WTC11 (cell line): ENCODE measurements at regions of chr11 and their contacts with region 1.

Region 1: DNA sequence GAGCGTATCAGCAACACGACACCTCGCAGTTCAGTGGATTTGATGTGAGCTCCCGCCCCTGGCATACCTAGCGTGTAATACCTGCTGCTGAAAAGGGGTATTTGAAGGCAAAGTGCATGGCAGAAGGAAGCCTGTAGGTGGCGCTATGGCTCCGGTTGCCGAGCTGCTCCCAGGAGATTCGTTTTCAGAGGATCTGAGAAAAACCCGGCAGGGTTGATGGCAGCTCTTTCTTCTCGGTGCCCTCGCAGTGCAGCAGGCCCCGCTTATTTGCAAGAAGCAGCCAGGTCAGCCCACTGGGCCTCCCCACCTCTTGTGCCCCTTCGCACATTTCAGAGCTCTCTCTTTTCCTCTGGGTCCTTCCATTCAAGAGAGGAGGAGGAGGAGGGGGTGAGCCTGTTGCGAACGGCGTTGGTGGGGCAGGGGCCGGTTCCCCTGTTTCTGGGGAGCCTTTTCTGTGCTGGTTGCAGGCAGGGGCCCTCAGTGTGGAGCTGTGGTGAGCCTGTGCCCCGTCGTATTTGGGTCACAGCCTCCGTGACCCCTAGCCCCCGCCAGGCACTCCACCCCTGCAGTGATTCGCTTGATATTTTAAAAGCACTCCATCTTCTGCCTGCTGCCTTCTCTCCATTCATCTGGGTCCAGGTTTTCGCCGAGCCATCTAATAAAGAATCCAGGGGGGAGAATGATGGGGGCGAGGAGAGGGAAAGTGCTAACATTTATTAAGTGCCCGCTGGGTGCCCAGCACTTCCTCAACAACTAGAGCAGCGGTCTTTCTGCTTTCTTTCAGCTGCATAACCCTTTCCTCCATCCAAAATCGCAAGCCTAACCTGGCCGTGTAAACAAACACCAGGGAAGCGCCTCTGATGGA is 85.3 kb upstream of the SYT13 start:
- DNase-seq: peak; percentile 93
- ATAC-seq: peak; percentile 91
- H3K4me3 Mint-ChIP-seq: peak overlapping the region; percentile 65
- H3K27ac Mint-ChIP-seq: no peak overlapping the region
- H3K4me1 Mint-ChIP-seq: peaks cover 16% of the 10 kb centered on the region
- H3K27me3 Mint-ChIP-seq: peaks cover 13% of the 10 kb centered on the region
- CTCF ChIP-seq: peak; percentile 93

Region 2: GRCh38 chr11:45007011-45007410 is 364.5 kb before region 1 on chr11:
- CTCF ChIA-PET with region 1: no interaction called
- POLR2A ChIA-PET with region 1: no interaction called
- DNase-seq: no peak
- ATAC-seq: no peak
- H3K4me3 Mint-ChIP-seq: no peak overlapping the region
- H3K27ac Mint-ChIP-seq: no peak overlapping the region
- H3K4me1 Mint-ChIP-seq: no peaks in the 10 kb centered on the region
- H3K27me3 Mint-ChIP-seq: peaks cover 2% of the 10 kb centered on the region; the same call in 1 of the 2 replicates
- CTCF ChIP-seq: no peak

Region 3: GRCh38 chr11:45233121-45233803 is 138.2 kb before region 1 on chr11:
- CTCF ChIA-PET with region 1: interaction called, 10 read pairs
- POLR2A ChIA-PET with region 1: no interaction called
- DNase-seq: peak; percentile 93
- ATAC-seq: peak; percentile 94
- H3K4me3 Mint-ChIP-seq: no peak overlapping the region
- H3K27ac Mint-ChIP-seq: no peak overlapping the region
- H3K4me1 Mint-ChIP-seq: peaks cover 4% of the 10 kb centered on the region
- H3K27me3 Mint-ChIP-seq: peaks cover 12% of the 10 kb centered on the region
- CTCF ChIP-seq: peak; percentile 92

Region 4: GRCh38 chr11:45322891-45323600 is 48.4 kb before region 1 on chr11:
- CTCF ChIA-PET with region 1: no interaction called
- POLR2A ChIA-PET with region 1: no interaction called
- DNase-seq: no peak
- ATAC-seq: no peak
- H3K4me3 Mint-ChIP-seq: no peak overlapping the region
- H3K27ac Mint-ChIP-seq: no peak overlapping the region
- H3K4me1 Mint-ChIP-seq: no peaks in the 10 kb centered on the region
- H3K27me3 Mint-ChIP-seq: peaks cover 26% of the 10 kb centered on the region
- CTCF ChIP-seq: no peak

Region 5: DNA sequence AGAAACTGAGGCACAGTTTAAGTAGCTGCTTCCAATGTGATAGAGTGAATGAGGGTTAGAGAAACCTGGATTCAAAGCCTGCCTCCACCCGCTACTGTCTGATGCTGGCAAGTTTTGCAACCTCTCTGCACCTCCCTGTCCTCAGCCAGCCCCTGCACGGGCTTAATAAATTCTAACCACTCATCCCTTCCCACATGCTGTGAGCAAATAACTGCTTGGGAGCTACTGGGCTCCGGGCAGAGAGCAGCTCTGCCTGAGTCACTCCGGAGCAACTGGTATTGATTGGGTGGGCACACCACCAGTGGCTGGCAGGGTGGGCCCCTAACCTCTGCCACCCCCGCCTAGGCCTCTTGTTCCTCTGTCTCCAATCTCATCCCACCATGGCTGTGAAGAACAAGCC is 18.9 kb after region 1 on chr11:
- CTCF ChIA-PET with region 1: interaction called, 15 read pairs
- POLR2A ChIA-PET with region 1: no interaction called
- DNase-seq: no peak
- ATAC-seq: no peak
- H3K4me3 Mint-ChIP-seq: no peak overlapping the region
- H3K27ac Mint-ChIP-seq: no peak overlapping the region
- H3K4me1 Mint-ChIP-seq: peaks cover 11% of the 10 kb centered on the region
- H3K27me3 Mint-ChIP-seq: peaks cover 3% of the 10 kb centered on the region; the same call in 1 of the 2 replicates
- CTCF ChIP-seq: no peak

Region 6: DNA sequence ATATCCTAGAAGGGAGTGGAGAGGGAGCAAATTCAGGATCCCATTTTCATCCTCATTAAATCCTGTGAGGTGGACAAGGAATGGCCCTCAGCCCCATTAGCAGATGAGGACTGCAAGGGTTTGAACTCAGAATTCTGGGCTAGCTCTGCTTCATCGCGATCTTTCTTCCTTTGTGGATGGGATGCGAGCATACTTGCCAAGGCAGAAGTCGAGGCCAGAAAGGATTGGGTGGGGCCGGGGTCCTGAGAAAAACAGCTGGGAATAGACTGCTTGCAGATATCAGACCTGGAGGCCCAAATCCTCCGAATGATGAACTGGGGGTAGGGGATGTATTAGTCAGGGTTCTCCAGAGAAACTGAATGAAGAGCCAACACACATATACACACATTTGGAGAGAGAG is 115.0 kb after region 1 on chr11:
- CTCF ChIA-PET with region 1: interaction called, 10 read pairs
- POLR2A ChIA-PET with region 1: no interaction called
- DNase-seq: no peak
- ATAC-seq: no peak
- H3K4me3 Mint-ChIP-seq: no peak overlapping the region
- H3K27ac Mint-ChIP-seq: no peak overlapping the region
- H3K4me1 Mint-ChIP-seq: peaks cover 23% of the 10 kb centered on the region
- H3K27me3 Mint-ChIP-seq: no peaks in the 10 kb centered on the region; the same call in 1 of the 2 replicates
- CTCF ChIP-seq: no peak

Region 7: DNA sequence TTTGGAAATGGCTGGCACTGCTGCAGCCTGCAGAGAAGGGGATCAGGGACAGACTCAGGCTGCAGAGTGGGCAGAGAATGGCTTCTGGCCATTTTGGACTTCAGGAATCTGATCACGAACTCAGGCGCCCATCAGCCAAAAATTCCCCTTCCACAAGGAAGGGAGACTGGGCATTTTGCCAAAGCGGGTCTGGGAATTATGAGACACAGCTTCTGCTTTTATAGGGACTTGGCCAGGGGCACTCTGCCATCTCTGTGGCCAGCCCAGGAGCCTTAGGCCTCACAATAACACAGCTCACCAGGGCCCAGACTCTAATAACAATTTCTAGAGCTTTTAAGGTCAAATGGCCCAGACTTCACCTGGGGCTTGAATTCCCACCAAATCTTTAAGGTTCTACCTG is 219.3 kb after region 1 on chr11:
- CTCF ChIA-PET with region 1: interaction called, 10 read pairs
- POLR2A ChIA-PET with region 1: no interaction called
- DNase-seq: no peak
- ATAC-seq: no peak
- H3K4me3 Mint-ChIP-seq: no peak overlapping the region
- H3K27ac Mint-ChIP-seq: no peak overlapping the region
- H3K4me1 Mint-ChIP-seq: no peaks in the 10 kb centered on the region
- H3K27me3 Mint-ChIP-seq: peaks cover 6% of the 10 kb centered on the region; the same call in 1 of the 2 replicates
- CTCF ChIP-seq: no peak

Region 8: GRCh38 chr11:45665206-45665932 is 293.9 kb after region 1 on chr11 and contains the start of gene CHST1:
- CTCF ChIA-PET with region 1: interaction called, 28 read pairs
- POLR2A ChIA-PET with region 1: no interaction called
- DNase-seq: peak; percentile 43
- ATAC-seq: peak; percentile 25
- H3K4me3 Mint-ChIP-seq: peak within 1 kb of the TSS; percentile 70
- H3K27ac Mint-ChIP-seq: no peak within 1 kb of the TSS
- H3K4me1 Mint-ChIP-seq: peaks cover 32% of the 10 kb centered on the region
- H3K27me3 Mint-ChIP-seq: peaks cover 57% of the 10 kb centered on the region
- CTCF ChIP-seq: no peak
- total RNA-seq, gene CHST1: 2.4 to 2.6 TPM (median 2.4 TPM) in 3 replicates